SK-N-SH (cell line): ENCODE measurements at regions of chr2 and their contacts with region 1.

Region 1: DNA sequence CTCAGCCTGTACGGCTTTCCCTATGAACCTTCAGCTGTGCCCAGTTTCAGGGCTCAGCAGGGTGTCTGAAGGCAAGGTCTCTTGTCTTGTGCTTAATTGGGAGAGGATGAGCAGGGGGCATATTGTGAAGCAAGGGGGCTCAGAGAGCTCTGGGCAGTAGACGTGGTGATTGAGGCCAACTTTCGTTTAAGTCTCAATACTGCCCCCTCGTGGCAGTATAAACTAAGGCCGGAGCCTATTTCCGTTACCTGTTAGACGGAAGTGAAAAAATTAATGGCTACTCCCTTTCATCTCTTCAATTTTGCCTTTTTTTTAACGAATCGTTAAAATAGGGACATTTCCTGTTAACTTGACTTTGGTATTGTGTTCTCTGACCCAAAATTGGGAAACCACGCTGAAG is 193.4 kb downstream of the TDRD15 start:
- DNase-seq: peak; percentile 55
- H3K4me3 ChIP-seq: no peak overlapping the region; a peak in 1 of 4 replicates
- H3K27ac ChIP-seq: peak overlapping the region in 1 of 2 experiments; percentile 62; a peak in 2 of 4 replicates
- H3K4me1 ChIP-seq: peaks cover 0 to 6% of the 10 kb centered on the region in 2 experiments; a peak in 2 of 4 replicates
- H3K27me3 ChIP-seq: no peaks in the 10 kb centered on the region
- CTCF ChIP-seq: peak; percentile 57
- EP300 ChIP-seq: no peak
- RAD21 ChIP-seq: peak; percentile 88

Region 2: DNA sequence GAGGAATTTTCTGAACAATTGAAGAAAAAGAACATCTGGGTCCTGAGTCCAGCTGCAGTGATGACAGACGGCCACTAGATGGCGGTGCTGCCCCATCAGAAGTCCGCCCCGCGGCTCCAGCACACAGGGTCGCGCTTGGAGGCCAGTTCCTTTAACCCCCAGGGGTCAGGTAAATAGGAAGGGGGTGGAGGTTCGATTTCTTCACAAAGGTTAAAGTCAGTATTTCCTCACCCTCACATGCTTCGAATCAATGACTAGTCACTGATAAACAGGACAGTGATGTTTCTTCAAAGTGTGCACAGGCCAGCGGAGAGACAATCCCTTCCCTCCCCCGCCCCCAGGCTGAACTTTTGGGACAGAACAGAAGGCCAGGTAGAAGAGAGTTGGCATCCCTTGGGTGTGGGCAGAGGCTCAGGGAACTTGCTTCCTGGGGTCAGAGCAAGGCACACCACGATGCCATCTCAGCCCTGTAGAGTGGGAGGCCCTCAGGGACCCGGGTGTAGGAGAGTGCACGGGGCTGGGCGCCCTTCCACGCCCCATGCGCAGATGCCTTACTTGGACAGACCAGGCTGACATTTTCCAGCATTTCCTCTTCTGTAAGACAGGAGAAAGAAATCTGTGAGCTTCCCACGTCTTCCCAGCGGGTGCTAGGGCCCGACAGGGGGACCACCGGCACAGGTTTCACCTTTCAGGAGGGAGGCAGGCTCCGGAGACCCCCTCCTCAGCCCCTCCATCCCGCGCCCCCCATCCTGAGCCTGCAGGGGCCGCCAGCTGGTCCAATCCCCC is 274.0 kb before region 1 on chr2:
- CTCF ChIA-PET with region 1: interaction called, 14 read pairs
- POLR2A ChIA-PET with region 1: no interaction called
- DNase-seq: peak; percentile 91
- H3K4me3 ChIP-seq: peak overlapping the region in 1 of 2 experiments; percentile 41; a peak in 1 of 4 replicates
- H3K27ac ChIP-seq: no peak overlapping the region
- H3K4me1 ChIP-seq: peaks cover 0 to 23% of the 10 kb centered on the region in 2 experiments; a peak in 2 of 4 replicates
- H3K27me3 ChIP-seq: no peaks in the 10 kb centered on the region; the same call in 1 of the 2 replicates
- CTCF ChIP-seq: peak; percentile 100
- EP300 ChIP-seq: no peak
- RAD21 ChIP-seq: peak; percentile 100

Region 3: GRCh38 chr2:21194858-21195271 is 122.3 kb before region 1 on chr2:
- CTCF ChIA-PET with region 1: interaction called, 13 read pairs
- POLR2A ChIA-PET with region 1: no interaction called
- DNase-seq: peak; percentile 42
- H3K4me3 ChIP-seq: no peak overlapping the region
- H3K27ac ChIP-seq: peak overlapping the region in 1 of 2 experiments; percentile 93; a peak in 2 of 4 replicates
- H3K4me1 ChIP-seq: peaks cover 0 to 47% of the 10 kb centered on the region in 2 experiments; a peak in 2 of 4 replicates
- H3K27me3 ChIP-seq: no peaks in the 10 kb centered on the region
- CTCF ChIP-seq: no peak
- EP300 ChIP-seq: peak in 1 of 2 experiments; percentile 92; a peak in 2 of 4 replicates
- RAD21 ChIP-seq: peak; percentile 25; the same call in 1 of the 2 replicates

Region 4: GRCh38 chr2:21270708-21271122 is 46.4 kb before region 1 on chr2:
- CTCF ChIA-PET with region 1: interaction called, 15 read pairs
- POLR2A ChIA-PET with region 1: no interaction called
- DNase-seq: peak; percentile 70
- H3K4me3 ChIP-seq: no peak overlapping the region
- H3K27ac ChIP-seq: peak overlapping the region in 1 of 2 experiments; percentile 85; a peak in 2 of 4 replicates
- H3K4me1 ChIP-seq: peaks cover 0 to 59% of the 10 kb centered on the region in 2 experiments; a peak in 2 of 4 replicates
- H3K27me3 ChIP-seq: no peaks in the 10 kb centered on the region
- CTCF ChIP-seq: no peak
- EP300 ChIP-seq: peak in 1 of 2 experiments; percentile 90; a peak in 2 of 4 replicates
- RAD21 ChIP-seq: peak; percentile 28; the same call in 1 of the 2 replicates

Region 5: GRCh38 chr2:21301871-21302455 is 15.2 kb before region 1 on chr2:
- CTCF ChIA-PET with region 1: interaction called, 22 read pairs
- POLR2A ChIA-PET with region 1: no interaction called
- DNase-seq: no peak
- H3K4me3 ChIP-seq: no peak overlapping the region
- H3K27ac ChIP-seq: peak overlapping the region in 1 of 2 experiments; percentile 34; a peak in 2 of 4 replicates
- H3K4me1 ChIP-seq: peaks cover 0 to 20% of the 10 kb centered on the region in 2 experiments; a peak in 2 of 4 replicates
- H3K27me3 ChIP-seq: no peaks in the 10 kb centered on the region
- CTCF ChIP-seq: no peak
- EP300 ChIP-seq: no peak
- RAD21 ChIP-seq: no peak

Region 6: GRCh38 chr2:21372654-21373053 is 55.5 kb after region 1 on chr2:
- CTCF ChIA-PET with region 1: interaction called, 11 read pairs
- POLR2A ChIA-PET with region 1: no interaction called
- DNase-seq: peak; percentile 26
- H3K4me3 ChIP-seq: peak overlapping the region in 1 of 2 experiments; percentile 46; a peak in 1 of 4 replicates
- H3K27ac ChIP-seq: no peak overlapping the region
- H3K4me1 ChIP-seq: no peaks in the 10 kb centered on the region
- H3K27me3 ChIP-seq: no peaks in the 10 kb centered on the region
- CTCF ChIP-seq: peak; percentile 16; the same call in 1 of the 2 replicates
- EP300 ChIP-seq: no peak
- RAD21 ChIP-seq: peak; percentile 64

Region 7: GRCh38 chr2:21501376-21502027 is 184.4 kb after region 1 on chr2:
- CTCF ChIA-PET with region 1: no interaction called
- POLR2A ChIA-PET with region 1: no interaction called
- DNase-seq: no peak
- H3K4me3 ChIP-seq: no peak overlapping the region
- H3K27ac ChIP-seq: no peak overlapping the region
- H3K4me1 ChIP-seq: peaks cover 0 to 9% of the 10 kb centered on the region in 2 experiments; a peak in 1 of 4 replicates
- H3K27me3 ChIP-seq: no peaks in the 10 kb centered on the region
- CTCF ChIP-seq: no peak
- EP300 ChIP-seq: no peak
- RAD21 ChIP-seq: no peak